Activated naive CD4-positive, alpha-beta T cell treated with anti-CD3 and anti-CD28 coated beads for 36 hours (primary cell): ENCODE measurements at regions of chr10 and their contacts with region 1.

Region 1: DNA sequence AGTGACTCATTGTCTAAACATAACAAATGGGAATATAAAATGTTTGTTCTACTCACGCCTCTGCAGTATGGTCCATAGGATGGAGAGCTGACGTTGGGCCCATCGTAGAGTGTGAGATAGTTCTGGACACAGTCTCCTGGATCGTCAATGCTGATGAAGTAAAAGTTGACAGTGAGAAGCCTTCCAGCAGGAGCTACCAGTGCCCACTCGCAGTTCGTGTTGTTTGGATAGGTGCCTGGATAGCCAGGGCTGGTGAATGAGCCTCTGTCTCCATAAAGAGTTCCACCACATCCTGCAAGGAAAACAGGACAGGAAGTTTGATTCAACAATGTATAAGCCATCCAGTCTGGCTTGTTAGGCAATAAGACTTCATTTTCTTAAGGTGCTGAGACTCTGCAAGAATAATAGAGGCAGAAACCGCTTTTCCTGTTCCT is 79.6 kb downstream of the OR13A1 start:
- DNase-seq: no peak
- H3K4me3 Mint-ChIP-seq: no peak overlapping the region
- H3K27ac Mint-ChIP-seq: no peak overlapping the region
- H3K4me1 Mint-ChIP-seq: peaks cover 5% of the 10 kb centered on the region
- H3K27me3 Mint-ChIP-seq: peaks cover 4% of the 10 kb centered on the region

Region 2: DNA sequence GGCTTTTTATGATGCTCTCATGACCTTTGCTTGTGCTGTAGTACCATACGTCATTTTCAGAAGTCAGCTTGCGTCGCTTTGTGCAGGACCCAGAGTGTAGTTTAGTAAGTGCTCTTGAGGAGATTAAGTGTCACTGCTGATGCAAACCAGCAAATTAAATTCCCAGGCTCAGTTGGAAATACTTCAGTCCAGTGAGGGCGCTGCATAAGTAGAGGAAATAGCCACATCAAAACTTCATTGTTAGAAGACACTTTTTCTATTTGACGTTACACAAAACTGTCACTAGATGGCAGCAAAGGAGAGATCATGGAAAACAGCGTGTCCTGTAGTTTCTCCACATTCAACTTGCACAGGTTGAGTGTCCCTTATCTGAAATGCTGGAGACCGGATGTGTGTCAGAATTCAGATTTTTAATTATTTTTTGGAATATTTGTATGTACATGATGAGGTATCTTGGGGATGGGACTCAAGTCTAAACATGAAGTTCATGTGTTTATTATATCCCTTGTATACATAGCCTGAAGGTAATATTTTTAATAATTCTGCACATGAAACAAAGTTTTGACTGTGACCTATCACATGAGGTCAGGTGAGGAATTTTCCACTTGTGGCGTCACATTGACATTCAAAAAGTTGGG is 227.2 kb before region 1 on chr10:
- CTCF ChIA-PET with region 1: interaction called, 3 read pairs
- intact Hi-C with region 1: loop called (anchors 2 kb)
- DNase-seq: peak; percentile 33
- H3K4me3 Mint-ChIP-seq: no peak overlapping the region
- H3K27ac Mint-ChIP-seq: no peak overlapping the region
- H3K4me1 Mint-ChIP-seq: no peaks in the 10 kb centered on the region
- H3K27me3 Mint-ChIP-seq: no peaks in the 10 kb centered on the region

Region 3: GRCh38 chr10:45224219-45224841 is 11.5 kb before region 1 on chr10:
- CTCF ChIA-PET with region 1: interaction called, 11 read pairs
- intact Hi-C with region 1: no loop called
- DNase-seq: no peak
- H3K4me3 Mint-ChIP-seq: no peak overlapping the region
- H3K27ac Mint-ChIP-seq: no peak overlapping the region
- H3K4me1 Mint-ChIP-seq: no peaks in the 10 kb centered on the region
- H3K27me3 Mint-ChIP-seq: peaks cover 8% of the 10 kb centered on the region

Region 4: GRCh38 chr10:45464958-45465567 is 229.2 kb after region 1 on chr10:
- CTCF ChIA-PET with region 1: interaction called, 4 read pairs
- intact Hi-C with region 1: loop called (anchors 2 kb)
- DNase-seq: peak; percentile 88
- H3K4me3 Mint-ChIP-seq: no peak overlapping the region
- H3K27ac Mint-ChIP-seq: no peak overlapping the region
- H3K4me1 Mint-ChIP-seq: peaks cover 16% of the 10 kb centered on the region
- H3K27me3 Mint-ChIP-seq: no peaks in the 10 kb centered on the region

Region 5: GRCh38 chr10:45594276-45595106 is 358.7 kb after region 1 on chr10:
- CTCF ChIA-PET with region 1: no interaction called
- intact Hi-C with region 1: loop called (anchors 10 kb)
- DNase-seq: peak; percentile 87
- H3K4me3 Mint-ChIP-seq: peak overlapping the region; percentile 77
- H3K27ac Mint-ChIP-seq: peak overlapping the region; percentile 37
- H3K4me1 Mint-ChIP-seq: peaks cover 29% of the 10 kb centered on the region
- H3K27me3 Mint-ChIP-seq: no peaks in the 10 kb centered on the region